ENCODE measurements at regions of chr12 and their contacts with region 1.

Region 1: GRCh38 chr12:89709995-89710872 is 1.6 kb upstream of the ATP2B1 start:
- DNase-seq: no peak
- CTCF ChIP-seq: no peak

Region 2: DNA sequence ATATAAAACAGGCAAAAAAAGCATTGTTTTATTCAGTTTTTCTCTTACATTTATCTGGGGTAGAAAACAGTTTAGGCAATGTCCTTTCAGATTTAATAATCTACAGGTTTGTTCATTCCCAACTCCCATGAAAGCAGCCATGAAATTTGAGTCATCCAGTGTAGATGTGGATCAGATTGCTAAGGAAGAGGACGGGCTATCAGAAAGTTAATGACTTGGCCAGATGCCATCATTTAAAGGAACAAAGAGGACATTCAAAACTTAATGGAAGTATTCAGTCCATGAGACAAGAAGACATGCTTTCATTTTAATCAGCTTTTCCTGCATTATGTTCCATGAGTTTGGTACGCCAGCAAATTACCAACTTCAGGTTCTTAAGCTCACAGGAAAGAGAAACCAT is 153.3 kb before region 1 on chr12:
- in situ Hi-C with region 1: no loop called
- DNase-seq: no peak
- CTCF ChIP-seq: no peak

Region 3: GRCh38 chr12:89768586-89769486 is 58.6 kb after region 1 on chr12:
- in situ Hi-C with region 1: loop called (anchors 10 kb)
- DNase-seq: no peak
- CTCF ChIP-seq: no peak

Region 4: DNA sequence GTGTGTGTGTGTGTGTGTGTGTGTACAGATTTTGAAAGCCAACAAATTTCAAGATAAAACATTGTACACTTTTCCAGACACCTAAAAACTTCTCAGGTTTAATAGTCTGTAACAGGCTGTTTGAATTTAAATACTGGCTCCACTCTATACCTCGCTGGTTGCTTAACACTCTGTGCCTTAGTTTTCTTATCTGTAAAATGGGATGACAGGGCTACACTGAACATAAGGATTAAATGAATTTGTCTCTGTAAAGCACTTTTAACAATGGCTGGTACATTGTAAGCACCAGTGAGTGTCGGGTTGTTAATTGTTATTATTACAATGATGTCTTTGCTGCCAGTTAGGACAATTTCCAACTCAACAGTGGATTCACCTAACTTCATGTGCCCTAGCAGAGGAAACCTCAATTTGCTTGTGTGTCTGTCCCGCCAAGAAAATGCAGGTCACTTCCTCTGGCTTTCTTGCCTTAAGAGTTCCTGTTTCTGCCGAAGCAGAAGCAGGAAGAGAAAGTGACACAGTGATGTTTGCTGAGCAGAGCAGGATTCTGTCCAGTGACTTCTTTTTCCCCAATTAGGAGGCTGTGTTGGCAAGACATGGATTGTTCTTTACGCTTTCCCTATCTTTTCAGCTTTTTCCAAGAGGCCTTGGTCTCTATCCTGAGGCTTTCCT is 152.4 kb after region 1 on chr12:
- in situ Hi-C with region 1: loop called (anchors 5 kb)
- DNase-seq: peak; percentile 37
- CTCF ChIP-seq: no peak